Body of pancreas (tissue), 4 donors: ENCODE measurements at regions of chr7 and their contacts with region 1.

Region 1: DNA sequence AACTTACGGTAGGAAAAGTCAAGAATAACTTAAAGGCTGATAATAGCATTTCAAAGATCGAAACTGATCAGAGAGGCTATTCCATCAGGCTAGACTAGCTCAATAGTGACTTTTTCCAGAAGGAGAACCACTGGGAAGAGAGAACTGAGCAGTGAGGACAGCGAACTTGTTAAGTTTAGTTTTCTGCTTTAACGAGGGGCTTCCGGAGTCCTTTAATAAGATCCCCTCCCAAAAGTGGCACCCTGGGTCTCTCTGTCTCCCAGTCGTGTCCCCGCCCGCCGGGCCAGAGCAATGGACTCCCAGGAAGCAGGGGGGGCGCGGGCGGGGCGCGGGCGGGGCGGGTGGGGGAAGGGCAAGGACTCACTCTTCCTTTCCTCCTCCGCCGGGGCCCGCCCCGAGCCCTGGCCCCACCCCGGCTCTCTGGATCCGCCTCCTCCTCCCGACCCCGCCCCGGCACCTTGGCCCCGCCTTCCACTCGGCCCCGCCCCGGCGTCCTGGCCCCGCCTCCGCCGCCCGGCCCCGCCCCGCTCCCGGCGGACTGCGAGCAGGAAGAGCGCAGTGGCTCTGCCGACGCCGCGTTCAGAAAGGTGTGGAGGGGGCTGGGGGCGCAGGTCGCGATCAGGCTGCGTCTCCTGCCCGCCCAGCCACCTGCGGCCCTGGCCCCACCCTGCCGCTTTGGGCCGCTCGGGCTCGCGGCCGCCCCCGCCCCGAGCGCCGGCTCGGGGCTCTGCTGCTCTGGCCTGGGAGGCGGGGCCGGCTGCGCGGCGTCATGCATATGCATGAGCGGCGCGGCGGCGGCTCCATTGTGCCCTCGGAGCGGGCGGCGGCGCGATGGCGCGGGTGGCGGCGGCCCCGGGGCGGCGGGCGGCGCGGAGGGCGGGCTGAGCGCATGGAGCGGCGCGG is at the start of gene ZMIZ2:
- DNase-seq: peak; percentile 92 to 96 (median 93)
- ATAC-seq: peak; percentile 95
- H3K4me3 ChIP-seq: peak within 1 kb of the TSS; percentile 82 to 83
- H3K27ac ChIP-seq: peak within 1 kb of the TSS; percentile 85 to 98 (median 96)
- H3K4me1 ChIP-seq: peaks cover 31% of the 10 kb centered on the region
- H3K27me3 ChIP-seq: no peaks in the 10 kb centered on the region
- CTCF ChIP-seq: peak in 2 of 7 experiments; percentile 7 to 11
- POLR2A ChIP-seq: peak; percentile 30 to 53 (median 49)
- total RNA-seq, gene ZMIZ2: 30.9 to 50.4 TPM

Region 2: GRCh38 chr7:44606450-44607254 is 141.6 kb before region 1 on chr7 and contains the start of gene OGDH:
- intact Hi-C with region 1: loop called (anchors 10 kb)
- DNase-seq: peak; percentile 99
- ATAC-seq: peak; percentile 96
- H3K4me3 ChIP-seq: peak within 1 kb of the TSS; percentile 73 to 98
- H3K27ac ChIP-seq: peak within 1 kb of the TSS; percentile 98 to 99 (median 98)
- H3K4me1 ChIP-seq: peaks cover 25% of the 10 kb centered on the region
- H3K27me3 ChIP-seq: no peaks in the 10 kb centered on the region
- CTCF ChIP-seq: peak in 2 of 7 experiments; percentile 16 to 28
- POLR2A ChIP-seq: peak; percentile 90 to 97 (median 95)
- total RNA-seq, gene OGDH: 36.1 to 46.1 TPM